ENCODE measurements at regions of chr11 and their contacts with region 1.

Region 1: GRCh38 chr11:71787098-71787823 is 45.7 kb upstream of the DEFB108B start:
- DNase-seq: peak; percentile 97
- ATAC-seq: peak; percentile 100

Region 2: GRCh38 chr11:71563401-71563800 is 223.9 kb before region 1 on chr11:
- intact Hi-C with region 1: no loop called
- DNase-seq: no peak
- ATAC-seq: no peak

Region 3: DNA sequence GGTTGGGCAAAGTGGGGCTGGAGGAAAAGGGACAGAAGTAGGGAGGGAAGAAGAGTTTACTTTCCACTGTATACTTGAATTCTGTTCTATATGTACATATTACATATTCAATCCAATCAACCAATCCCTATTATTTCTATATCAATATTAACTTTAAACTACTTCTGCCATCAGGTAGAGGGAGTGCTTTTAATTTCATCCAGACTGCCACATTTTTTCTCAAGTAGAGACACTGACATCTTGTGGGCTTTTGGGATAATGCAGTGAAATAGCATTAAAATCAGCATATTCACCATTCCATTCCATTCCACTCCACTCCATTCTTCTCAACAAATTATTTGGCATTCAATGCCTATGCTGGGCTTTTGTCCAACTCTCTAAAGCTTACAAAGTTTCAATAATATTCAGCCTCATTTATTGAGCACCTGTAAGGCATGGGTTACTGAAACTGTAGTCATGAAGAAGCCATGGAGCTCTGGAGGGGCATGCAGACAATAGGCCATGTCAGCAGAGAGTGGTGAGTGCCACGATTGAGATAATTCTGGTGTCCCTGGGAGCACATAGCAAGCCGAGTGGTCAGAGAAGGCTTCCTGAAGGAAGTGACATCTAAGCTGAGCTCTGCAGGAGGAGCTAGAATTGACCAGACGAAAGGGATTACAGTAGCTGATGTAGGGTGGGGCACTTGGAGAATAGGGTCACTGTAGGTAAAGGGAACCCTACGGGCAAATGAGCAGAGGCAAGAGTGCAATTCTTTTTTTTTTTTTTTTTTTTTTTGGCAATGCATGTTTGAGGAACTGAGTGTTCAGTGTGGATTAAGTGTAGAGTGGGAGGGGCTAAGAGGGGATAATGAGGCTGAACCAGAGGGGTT is 659.9 kb after region 1 on chr11:
- intact Hi-C with region 1: loop called (anchors 10 kb)
- DNase-seq: no peak
- ATAC-seq: no peak